Posterior vena cava (tissue), 2 donors: ENCODE measurements at regions of chr15 and their contacts with region 1.

Region 1: DNA sequence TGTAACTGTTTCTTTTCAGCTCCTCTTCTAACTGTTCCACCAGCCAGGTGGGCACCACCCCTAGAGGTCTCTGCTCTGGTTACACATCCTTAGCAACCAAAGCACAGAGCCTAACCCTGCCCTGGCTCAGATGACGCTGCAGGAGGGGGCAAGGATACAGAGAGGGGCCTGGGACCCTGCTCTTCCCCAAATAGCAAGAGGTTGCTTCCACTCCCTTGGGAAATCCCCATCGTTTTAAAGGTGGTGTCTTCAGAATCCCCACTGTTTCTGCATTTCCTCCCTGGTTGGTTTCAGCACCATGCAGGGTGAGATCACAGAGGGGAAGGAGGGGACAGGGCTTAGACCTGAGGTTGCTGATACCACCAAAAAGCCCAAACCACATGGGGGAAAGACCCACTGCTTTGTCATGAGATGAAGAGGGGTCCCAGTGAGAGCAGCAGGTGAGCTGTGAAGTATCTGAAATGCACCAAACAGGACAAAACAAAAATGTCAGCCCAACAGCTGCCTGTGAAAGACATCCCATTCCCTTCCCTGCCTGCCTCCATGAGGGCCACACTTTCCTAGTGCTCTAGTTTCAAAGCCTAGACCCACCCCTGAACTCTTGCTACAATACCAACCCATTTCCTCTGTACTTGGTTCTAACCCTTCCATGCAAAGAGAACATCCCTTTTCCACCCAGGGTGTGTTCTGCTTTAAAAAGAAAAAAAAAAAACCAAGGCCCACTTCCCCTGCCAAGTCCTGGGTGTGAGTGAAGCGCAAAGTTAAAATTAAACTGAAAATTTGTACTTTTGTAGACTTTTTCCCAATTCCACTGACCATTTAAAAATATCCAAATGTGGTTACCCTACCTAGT is 29.0 kb downstream of the ANP32A start:
- DNase-seq: no peak

Region 2: DNA sequence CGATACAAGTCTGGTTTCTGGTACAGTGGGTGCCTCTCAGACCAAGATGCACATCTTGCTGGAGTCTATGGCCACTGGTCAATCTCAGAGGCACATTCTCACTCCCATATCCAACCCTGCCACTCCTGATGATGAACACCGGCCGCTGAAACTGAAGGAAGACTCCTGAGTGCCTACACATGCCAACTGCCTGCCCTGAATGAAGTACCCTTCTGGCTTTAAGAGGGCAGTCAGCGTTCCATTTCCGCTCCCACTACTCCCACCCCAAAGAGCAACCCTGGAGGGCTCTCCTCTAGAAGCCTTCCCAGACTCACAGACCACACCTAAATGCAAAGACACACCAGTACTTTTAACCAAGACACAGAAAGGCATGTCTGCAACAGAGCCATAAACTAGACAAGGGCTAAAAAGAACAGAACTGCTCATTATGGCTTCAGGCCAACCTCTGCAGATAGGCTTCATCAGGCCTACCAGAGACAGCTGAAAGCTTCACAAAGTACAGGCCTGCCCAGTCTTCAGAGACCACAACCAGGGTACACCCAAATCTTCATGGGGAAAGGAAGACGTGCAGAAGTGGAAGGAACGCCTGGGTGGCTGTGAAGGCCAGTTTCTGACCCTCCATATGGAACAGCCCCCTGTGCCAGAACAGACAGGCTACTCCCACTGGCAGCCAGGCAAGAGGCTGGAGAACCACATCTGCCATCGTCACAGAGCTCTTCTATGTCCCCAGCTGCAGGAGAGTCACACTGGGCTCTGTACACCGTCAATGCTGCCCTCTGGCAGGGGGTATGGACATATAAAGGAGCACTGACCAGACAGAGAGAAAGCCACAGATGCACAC is 14.8 kb after region 1 on chr15:
- intact Hi-C with region 1: loop called in 1 of 2 experiments (anchors 1 kb)
- DNase-seq: no peak

Region 3: DNA sequence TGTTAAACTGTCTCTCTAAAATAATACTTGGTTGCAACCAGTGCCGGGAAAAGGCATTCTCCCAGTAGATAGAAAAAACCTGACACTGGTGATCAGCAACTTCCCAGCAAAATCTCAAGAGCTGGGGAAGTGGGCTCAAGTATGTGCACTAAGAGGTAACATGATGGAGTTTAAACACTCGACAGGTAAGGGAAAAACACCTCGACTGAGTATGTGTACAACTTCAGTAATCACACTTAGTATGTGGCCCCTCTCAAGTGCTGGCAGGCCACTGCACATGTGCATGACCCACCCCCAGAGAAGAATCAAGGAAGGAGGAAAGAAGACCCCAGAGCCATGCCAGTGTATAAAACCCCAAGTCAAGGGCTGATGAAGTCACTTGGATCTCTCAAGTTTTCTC is 166.0 kb after region 1 on chr15:
- intact Hi-C with region 1: no loop called
- DNase-seq: no peak